BJ (cell line): ENCODE measurements at regions of chr5 and their contacts with region 1.

Region 1: DNA sequence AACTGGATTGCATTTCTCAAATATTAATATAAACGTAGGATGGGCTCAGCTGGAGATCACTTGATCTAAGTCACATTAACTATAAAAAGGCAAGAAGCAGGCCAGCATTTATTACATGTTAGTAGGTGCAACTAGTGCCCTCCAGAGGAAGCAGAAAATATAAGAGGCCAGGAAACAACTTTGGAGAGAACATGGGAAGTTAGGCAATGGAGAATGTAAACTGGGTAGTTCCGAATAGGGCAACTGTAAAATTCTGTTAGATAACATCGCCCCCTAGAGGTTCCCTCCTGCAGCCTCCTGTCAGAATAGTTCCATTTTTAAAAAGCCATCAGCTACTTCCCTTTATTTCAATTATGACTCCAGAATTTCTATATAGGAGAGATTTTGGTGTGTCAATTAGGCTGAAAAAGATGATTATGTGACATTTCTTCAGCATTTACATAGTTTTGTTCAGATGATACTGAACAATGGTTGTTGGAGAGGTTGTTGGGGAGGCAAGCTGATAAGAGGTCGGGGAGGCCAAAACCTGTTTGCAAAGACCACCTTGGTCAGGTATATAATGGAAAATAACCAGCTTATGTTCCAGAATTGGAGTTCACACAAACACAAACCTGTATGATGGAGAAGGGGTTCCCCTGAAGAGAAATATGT is 22.4 kb downstream of the CCL28 start:
- DNase-seq: peak; percentile 65
- H3K4me3 ChIP-seq: no peak overlapping the region
- H3K27me3 ChIP-seq: no peaks in the 10 kb centered on the region
- CTCF ChIP-seq: peak; percentile 82

Region 2: DNA sequence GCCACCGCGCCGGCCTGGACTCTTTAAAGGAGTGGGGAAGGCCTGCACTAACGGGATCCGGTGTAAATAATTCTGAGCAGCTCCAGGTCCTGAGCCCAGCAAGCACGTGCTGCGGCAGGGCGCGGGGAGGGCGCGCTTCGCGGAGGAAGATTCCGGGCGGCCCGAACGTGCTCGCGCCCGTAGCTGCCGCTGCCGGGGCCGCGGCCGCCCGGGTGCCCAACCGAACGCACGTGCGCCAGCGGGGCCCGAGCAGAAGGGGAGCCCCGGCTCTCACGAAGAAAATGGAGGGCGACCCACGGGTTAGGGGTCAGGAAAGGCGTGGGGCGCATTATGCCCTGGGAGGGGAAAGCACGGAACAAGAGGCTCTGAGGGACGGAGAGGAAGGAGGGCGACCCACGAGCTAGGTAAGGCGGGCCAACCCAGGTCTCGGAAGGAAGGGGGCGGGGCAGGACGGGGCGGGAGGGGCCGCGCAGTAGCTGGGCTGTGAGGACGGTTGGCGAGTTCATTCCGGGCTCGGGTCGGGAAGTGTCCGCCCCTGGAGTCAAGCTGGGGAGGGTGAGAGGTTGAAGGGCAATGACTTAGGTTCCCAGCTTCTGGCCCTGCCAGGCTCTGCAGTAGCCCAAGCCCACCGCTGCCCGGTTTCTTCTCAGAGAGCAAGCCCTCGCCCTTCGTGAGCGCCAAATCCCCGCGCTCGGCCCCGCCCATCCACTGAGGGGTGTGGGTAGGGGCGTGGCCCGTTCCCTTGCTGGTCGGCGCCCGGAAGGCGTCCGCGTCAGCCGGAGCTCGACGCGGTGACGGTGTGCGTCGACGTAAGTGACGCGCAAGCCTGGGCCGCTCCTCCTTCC is 268.9 kb before region 1 on chr5 and contains the start of gene ZNF131:
- CTCF ChIA-PET with region 1: interaction called, 17 read pairs
- POLR2A ChIA-PET with region 1: no interaction called
- DNase-seq: peak; percentile 79
- H3K4me3 ChIP-seq: peak within 1 kb of the TSS; percentile 81
- H3K27me3 ChIP-seq: no peaks in the 10 kb centered on the region
- CTCF ChIP-seq: no peak
- polyA plus RNA-seq, gene ZNF131: 23.3 and 33.3 TPM in 2 replicates

Region 3: GRCh38 chr5:43227655-43228054 is 162.1 kb before region 1 on chr5:
- CTCF ChIA-PET with region 1: interaction called, 26 read pairs
- POLR2A ChIA-PET with region 1: no interaction called
- DNase-seq: no peak
- H3K4me3 ChIP-seq: no peak overlapping the region
- H3K27me3 ChIP-seq: no peaks in the 10 kb centered on the region
- CTCF ChIP-seq: peak; percentile 52

Region 4: DNA sequence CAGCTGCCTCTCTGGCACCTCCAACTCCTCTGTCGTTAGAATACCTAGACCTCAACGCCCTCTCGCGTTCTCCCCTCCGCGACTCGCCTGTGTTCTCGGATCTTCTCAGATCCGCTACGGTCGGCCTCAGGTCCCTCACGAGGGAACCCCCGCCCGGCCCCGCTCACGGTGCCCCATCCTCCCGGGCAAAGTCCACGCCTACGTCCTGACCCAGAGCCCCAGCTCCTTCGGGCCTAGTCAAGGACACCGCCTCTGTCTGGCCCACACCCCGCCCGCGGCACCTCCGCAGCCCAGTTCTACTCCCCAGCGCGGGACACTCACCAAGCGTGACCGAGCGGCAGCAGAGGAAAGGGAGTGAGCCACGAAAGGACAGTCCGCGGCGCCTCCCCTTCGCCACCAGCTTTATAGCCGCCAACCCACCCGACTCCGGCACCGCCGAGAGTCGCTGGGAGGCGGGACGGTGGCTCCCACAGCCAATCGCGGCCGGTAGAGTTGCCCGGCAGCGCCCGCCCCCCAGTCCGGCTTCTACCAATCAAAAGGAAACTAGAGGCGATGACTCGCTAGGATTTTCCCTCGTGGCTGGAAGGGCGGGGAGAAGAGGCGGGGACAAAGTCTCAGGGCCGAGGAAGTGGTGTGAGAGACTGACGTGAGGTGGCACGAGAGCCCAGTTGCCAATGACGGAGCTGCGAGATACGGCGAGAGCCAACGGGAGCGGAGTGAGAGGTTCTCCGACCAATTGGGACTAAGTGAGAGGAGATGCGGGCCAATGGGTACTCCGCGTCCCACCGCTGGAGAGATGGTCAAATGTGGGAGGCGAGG is 76.6 kb before region 1 on chr5 and contains the start of gene HMGCS1:
- CTCF ChIA-PET with region 1: interaction called, 23 read pairs
- POLR2A ChIA-PET with region 1: no interaction called
- DNase-seq: peak; percentile 98
- H3K4me3 ChIP-seq: peak within 1 kb of the TSS; percentile 79
- H3K27me3 ChIP-seq: 0 out of 2 replicates have a peak, but pooled peaks cover 2% of the 10 kb centered on the region
- CTCF ChIP-seq: peak; percentile 19; the same call in 1 of the 2 replicates
- polyA plus RNA-seq, gene HMGCS1: 8.6 and 11.3 TPM in 2 replicates

Region 5: GRCh38 chr5:43484106-43484849 is 94.5 kb after region 1 on chr5:
- CTCF ChIA-PET with region 1: interaction called, 10 read pairs
- POLR2A ChIA-PET with region 1: no interaction called
- DNase-seq: peak; percentile 43
- H3K4me3 ChIP-seq: peak overlapping the region; percentile 94
- H3K27me3 ChIP-seq: no peaks in the 10 kb centered on the region
- CTCF ChIP-seq: peak; percentile 81